GM13977 (cell line): ENCODE measurements at regions of chr12 and their contacts with region 1.

Region 1: DNA sequence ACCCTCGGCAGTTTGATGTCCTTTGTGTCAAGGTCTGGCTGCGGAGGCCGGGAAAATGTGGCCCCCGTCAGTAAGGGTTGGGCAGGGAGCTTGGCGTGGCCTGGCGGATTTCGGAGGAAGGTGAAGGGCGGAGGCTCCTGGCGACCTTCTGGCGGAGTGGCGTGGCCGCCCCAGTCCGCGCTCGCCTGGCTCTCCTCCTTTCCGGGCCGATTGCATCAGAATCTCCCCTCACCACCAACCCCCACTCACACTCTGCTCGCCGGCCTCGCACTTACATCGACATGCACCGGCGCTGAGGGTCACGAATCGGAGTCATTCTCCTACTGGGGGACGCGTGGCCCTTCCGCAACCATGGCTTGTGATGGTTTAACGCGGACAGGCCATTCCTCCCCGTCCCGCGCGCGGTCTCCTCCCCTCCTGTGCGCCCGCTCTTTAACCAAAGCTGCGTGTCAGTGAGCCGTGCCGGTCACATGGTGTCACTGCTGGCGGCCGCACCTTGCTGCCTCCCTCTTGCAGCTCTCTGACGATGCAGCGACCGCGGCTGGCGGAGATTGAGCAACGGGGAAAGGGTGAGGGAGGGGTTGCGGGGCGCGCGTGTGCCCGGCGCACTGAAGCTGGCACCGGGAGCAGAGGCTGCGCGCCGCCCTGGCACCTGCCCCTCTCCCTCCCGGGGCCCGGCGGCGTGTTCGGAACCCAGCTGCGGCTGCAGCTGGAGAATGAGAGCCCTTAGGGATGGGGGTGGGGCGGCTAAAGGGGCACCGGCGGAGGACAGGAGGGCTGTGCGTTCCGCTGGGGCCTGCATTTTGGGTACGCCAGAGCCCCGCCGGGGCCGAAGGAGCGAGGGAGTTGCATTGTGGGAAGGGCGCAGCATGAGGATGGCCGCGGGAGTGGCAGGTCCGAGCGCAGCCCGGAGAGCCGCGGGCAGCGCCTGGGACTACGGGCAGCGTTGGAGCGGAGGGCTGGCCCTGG is at the start of gene SLC38A1:
- DNase-seq: peak; percentile 90
- CTCF ChIP-seq: peak; percentile 7

Region 2: DNA sequence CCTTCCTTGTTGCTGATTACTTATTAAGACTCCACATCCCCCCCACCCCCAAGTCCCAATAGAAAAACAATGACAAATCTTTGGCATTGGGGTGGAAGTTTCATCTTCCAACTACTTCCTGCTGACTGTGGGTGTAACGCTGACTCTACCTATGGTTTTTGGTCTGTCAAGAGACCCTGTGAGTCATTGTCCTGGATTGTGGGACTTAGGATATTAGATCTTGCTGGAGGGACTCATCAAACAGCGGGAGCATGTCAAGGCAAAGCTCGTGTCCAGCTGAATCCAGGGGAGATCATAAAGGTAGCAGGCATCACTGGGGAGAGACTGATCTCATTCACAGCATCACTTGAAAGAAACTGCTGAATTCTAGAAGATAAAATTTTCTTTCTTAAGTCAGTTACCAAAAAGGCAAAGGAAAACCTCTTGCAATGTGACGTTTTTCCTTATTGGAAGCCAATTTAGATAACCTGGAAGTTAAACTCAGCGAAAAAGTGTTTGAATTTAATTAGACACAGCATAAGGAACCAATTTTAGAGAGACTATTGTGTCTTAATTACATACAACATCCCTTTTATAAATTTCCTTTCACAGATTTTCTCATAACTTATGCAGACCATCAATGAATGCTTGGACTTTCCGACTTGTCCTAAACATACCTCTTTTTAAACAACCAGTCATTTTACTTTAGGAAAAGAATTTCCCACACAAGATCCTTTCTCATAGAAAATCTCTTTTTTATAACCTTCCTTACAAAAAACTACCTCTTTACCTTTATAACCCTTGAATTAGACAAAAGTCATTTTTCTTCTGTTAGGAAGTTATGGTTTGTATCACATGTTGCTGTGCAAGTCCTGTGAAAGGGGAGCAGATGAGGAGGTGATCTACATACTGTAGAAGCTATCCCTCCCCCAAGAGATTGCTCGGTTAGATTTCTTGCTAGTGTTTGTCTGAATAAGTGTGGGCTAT is 183.9 kb before region 1 on chr12:
- in situ Hi-C with region 1: no loop called
- DNase-seq: no peak
- CTCF ChIP-seq: no peak

Region 3: DNA sequence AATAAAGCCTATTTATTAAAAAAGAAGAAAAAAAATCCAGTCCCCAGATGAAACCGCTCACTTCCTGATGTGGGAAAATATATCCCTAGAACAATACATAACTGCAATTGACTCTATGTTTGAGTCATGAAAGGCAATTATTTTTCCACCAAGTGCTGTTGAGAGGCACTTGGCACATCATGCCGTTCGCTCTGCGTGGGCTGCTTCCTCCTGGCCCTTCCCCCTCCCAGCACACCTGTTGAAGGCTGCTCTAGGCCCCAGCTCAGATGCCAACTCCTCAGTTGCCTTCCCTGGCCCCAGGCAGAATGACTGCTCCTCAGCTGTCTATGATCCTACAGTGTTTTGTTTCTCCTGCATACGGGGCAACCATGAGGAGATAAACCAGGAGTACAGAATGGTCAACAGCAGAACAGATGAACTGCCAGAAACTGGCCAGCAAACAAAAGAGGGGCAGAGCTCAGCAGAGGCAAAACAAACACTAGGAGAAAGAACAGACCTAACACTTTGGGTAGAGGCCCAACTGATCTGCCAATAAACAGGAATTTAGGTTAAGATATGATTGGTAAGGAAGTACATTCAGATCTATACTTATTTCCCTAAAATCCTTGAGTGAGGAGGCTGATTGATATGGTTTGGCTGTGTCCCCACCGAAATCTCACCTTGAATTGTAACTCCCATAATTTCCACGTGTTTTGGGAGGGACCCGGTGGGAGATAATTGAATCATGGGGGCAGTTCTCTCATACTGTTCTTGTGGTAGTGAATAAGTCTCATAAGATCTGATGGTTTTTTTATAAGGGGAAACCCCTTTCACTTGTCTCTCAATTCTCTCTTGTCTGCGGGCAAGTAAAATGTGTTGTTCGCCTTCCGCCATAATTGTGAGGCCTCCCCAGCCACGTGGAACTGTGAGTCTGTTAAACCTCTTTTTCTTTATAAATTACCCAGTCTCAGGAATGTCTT is 58.7 kb before region 1 on chr12:
- in situ Hi-C with region 1: loop called (anchors 10 kb)
- DNase-seq: no peak
- CTCF ChIP-seq: no peak

Region 4: DNA sequence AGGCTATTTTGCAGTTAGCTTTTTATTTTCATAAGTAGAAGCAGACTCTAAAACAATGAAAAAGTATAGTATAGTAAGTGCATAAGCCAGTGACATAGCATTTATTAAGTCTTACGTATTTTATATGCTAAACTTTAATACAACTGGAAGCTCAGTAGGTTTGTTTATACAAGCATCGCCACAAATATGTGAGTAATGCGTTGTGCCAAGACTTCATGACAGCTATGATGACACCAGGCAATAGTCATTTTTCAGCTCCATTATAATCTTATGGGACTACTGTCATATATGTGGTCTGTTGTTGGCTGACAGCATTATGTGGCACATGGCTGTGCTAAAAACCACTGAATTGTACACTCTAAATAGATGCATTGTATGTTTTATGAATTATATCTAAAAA is 63.4 kb after region 1 on chr12:
- in situ Hi-C with region 1: no loop called
- DNase-seq: no peak
- CTCF ChIP-seq: no peak